Activated CD4-positive, alpha-beta memory T cell treated with anti-CD3 and anti-CD28 coated beads for 36 hours (primary cell): ENCODE measurements at regions of chr15 and their contacts with region 1.

Region 1: GRCh38 chr15:51731549-51732267 is 5.7 kb downstream of the LYSMD2 start:
- DNase-seq: peak; percentile 45
- H3K4me3 Mint-ChIP-seq: peak overlapping the region; percentile 66
- H3K27ac Mint-ChIP-seq: peak overlapping the region; percentile 77
- H3K4me1 Mint-ChIP-seq: peaks cover 79% of the 10 kb centered on the region
- H3K27me3 Mint-ChIP-seq: no peaks in the 10 kb centered on the region

Region 2: DNA sequence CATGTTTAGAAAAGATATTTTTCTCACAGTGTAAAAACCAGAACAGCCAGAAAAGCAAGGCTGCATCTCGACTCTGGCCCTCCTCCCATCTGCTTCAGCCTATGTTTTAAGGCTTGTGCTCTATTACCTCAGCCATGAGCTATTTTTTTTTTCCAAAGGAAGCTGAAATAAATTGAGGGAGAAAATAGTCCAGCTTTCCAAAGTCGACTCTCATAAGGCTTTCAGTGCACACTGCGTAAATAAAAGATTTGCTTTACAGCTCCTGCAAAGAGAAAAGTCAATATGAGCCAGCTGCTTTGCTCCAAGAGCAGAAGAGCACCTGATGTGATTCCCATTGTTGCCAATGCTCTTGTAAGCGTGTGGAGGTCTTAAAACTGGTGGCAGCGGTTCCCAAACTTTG is 23.7 kb before region 1 on chr15:
- CTCF ChIA-PET with region 1: no interaction called
- POLR2A ChIA-PET with region 1: no interaction called
- intact Hi-C with region 1: no loop called
- DNase-seq: no peak
- H3K4me3 Mint-ChIP-seq: no peak overlapping the region
- H3K27ac Mint-ChIP-seq: no peak overlapping the region
- H3K4me1 Mint-ChIP-seq: no peaks in the 10 kb centered on the region
- H3K27me3 Mint-ChIP-seq: peaks cover 3% of the 10 kb centered on the region

Region 3: DNA sequence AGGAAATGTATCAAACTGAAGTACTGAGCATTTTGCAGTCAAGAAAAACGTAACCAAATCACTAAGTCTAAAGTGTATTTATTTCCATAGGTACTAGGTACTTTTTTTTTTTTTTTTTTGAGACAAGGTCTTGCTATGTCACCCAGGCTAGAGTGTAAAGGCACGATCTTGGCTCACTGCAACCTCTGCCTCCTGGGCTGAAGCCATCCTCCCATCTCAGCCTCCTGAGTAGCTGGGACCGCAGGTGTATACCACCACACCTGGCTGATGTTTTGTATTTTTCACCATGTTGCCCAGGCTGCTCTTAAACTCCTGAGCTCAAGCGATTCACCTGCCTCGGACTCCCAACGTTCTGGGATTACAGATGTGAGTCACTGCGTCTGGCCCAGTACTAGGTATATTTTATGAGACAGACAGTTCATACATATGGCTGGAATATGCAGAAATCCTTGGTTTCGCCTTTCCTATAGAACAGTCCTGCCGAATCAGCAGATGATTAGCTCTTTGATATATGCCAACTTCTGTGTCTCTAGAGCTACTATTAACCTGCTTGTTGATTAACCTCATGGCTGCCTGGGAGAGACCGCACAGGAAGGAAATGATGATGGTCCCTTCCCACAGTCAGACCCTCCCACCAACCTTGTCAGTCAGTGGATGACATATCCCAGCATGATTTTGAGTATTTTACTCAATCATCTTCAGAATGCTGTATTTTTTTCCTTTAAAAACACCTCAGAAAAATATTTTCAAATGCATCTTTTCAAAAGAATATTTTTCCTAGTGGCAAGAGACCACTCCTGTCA is 130.1 kb after region 1 on chr15:
- CTCF ChIA-PET with region 1: no interaction called
- POLR2A ChIA-PET with region 1: no interaction called
- intact Hi-C with region 1: loop called (anchors 1 kb)
- DNase-seq: peak; percentile 79
- H3K4me3 Mint-ChIP-seq: peak overlapping the region; percentile 36
- H3K27ac Mint-ChIP-seq: peak overlapping the region; percentile 61
- H3K4me1 Mint-ChIP-seq: peaks cover 66% of the 10 kb centered on the region
- H3K27me3 Mint-ChIP-seq: no peaks in the 10 kb centered on the region